T-cell (primary cell): ENCODE measurements at regions of chr13 and their contacts with region 1.

Region 1: DNA sequence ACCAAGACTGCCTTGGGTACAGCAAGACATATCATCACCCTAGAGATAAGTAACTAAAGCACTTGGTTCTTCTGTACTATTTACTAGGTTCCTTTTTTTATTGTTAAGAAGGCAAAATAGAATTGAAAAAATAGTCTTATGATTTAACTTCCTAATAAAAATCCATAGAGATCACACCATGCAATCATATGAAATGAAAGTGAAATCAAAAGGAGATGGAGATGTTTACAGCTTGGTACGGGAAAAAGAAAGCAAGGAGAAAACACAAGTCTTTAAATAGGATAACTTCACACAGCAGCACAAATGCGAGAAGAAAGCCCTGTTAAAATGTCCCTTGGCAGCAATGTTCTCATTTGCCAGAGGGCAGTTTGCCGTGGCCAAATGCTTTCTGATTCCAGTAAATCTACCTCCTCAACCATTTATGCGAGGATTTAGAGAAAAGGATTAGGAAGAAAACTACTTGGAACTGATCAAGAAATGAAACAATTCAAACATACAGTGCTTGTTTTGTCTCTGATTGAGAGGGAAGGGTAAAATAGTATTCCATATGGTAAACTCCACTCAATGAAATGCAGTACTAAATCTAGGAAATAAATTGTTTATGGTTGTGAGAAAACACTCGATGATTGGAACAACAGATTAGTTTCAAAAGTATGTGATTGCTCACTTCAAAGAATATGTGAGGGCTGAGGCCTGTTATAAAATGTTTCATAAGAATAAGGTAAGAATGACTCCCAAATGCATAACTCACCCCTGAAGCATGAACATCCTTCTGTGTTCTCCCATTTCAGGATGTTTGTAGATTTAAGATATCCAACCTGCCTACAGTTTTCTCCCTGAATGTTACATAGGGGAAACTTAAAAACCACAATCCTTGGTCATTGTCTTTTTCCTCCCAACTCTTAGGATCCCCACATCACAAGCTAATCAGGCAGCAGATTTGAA is 487.8 kb downstream of the DACH1 start:
- DNase-seq: no peak
- ATAC-seq: no peak
- H3K4me3 ChIP-seq: no peak overlapping the region
- H3K4me3 Mint-ChIP-seq: no peak overlapping the region
- H3K27ac ChIP-seq: no peak overlapping the region
- H3K27ac Mint-ChIP-seq: no peak overlapping the region
- H3K4me1 ChIP-seq: no peaks in the 10 kb centered on the region
- H3K4me1 Mint-ChIP-seq: no peaks in the 10 kb centered on the region
- H3K27me3 ChIP-seq: no peaks in the 10 kb centered on the region
- H3K27me3 Mint-ChIP-seq: no peaks in the 10 kb centered on the region

Region 2: GRCh38 chr13:71477735-71478134 is 98.5 kb after region 1 on chr13:
- CTCF ChIA-PET with region 1: no interaction called
- POLR2A ChIA-PET with region 1: interaction called in 1 of 2 experiments, 12 read pairs
- DNase-seq: no peak
- ATAC-seq: no peak
- H3K4me3 ChIP-seq: no peak overlapping the region
- H3K4me3 Mint-ChIP-seq: no peak overlapping the region
- H3K27ac ChIP-seq: no peak overlapping the region
- H3K27ac Mint-ChIP-seq: no peak overlapping the region
- H3K4me1 ChIP-seq: no peaks in the 10 kb centered on the region
- H3K4me1 Mint-ChIP-seq: no peaks in the 10 kb centered on the region
- H3K27me3 ChIP-seq: no peaks in the 10 kb centered on the region
- H3K27me3 Mint-ChIP-seq: no peaks in the 10 kb centered on the region